Right ventricle myocardium inferior (tissue), 1 donor: ENCODE measurements at regions of chr15 and their contacts with region 1.

Region 1: DNA sequence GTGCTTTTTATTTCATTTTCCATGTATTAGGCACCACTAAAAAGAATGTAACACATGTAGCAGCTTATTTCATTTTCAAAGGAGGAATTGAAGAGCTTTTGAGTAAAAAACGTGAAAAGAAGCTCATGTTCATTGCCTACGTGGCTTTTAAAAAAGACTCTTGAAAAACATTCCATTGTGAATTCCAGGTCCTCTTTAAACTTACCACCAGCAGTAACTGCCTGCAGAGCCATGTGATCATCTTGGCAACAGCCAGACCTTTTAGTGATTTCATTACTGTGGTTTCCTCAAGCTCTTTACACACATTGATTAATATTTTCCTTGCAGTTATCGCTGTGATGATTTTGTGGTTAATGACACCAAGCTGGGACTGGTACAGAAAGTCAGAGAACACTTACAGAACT is 43.8 kb upstream of the FBXL22 start:
- DNase-seq: no peak
- ATAC-seq: peak; percentile 72

Region 2: DNA sequence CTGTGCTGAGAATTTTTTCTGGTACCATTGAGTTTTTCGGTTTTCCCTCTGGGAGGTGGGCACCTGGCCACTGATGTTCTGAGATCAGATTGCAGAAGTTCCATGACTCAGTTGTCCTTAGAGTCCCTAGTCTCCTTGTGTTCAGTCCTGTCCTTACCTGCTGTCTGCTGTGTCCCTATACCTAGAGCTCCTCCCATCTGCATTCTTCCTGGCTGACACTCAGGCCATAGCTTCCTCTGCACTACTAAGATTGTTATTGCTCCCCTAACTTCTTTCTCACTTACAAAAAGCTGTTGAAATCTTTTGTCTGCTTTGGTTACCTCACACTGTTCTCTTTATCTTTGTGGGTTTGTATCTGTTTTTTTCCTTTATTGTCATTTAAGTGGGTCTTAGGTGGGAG is 35.8 kb before region 1 on chr15:
- intact Hi-C with region 1: loop called (anchors 5 kb)
- DNase-seq: no peak
- ATAC-seq: no peak

Region 3: DNA sequence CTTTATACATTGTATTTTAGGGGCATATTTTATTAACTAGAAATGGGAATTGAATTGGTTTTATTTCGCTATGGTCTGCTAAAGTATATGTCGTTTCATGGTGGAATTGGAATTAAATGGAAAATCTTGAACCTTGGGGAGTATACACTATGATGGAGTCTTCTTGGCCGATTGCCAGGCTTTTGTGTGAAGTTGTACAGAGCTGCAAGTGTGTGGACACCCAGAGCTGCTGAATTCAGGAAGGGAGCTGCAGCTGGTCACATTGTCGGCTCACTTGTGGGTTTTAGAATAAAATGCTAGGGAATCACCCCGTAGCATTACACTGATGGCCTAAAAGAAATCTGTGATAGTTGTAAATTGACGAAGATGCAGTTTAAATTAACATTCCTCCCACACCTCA is 13.9 kb before region 1 on chr15:
- intact Hi-C with region 1: no loop called
- DNase-seq: no peak
- ATAC-seq: no peak

Region 4: DNA sequence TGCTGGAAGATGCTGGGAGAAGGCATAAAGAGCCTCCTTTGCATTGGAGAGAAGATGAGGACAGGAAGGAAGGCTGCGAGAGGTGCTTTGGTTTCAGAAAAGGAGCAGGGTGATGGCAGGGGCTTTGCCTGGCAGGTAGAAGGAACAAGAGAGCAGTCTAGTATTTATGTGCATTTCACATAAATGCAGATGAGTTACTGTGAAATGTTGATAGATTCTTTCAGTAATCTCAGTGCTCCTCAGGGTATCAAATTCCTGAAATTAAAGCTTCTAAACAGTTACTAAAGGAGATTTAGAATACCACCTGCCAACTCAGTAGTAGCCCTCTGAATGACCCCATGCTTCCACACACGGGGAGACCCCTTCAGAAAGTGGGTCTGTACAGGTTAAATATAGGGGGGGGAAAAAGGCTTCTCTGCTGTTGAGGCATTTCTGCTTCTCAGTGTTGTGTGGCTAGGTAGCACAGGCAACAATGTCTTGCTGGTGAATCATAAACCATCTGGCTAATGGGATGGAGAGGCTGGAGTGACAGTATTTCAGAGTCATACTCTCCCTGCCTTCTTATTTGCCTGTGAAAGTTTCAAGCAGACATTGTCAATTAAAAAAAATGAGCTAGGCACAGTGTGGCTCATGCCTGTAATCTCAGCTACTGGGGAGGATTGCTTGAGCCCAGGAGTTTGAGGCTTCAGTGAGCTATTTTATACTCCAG is 29.5 kb after region 1 on chr15:
- intact Hi-C with region 1: no loop called
- DNase-seq: no peak
- ATAC-seq: no peak

Region 5: DNA sequence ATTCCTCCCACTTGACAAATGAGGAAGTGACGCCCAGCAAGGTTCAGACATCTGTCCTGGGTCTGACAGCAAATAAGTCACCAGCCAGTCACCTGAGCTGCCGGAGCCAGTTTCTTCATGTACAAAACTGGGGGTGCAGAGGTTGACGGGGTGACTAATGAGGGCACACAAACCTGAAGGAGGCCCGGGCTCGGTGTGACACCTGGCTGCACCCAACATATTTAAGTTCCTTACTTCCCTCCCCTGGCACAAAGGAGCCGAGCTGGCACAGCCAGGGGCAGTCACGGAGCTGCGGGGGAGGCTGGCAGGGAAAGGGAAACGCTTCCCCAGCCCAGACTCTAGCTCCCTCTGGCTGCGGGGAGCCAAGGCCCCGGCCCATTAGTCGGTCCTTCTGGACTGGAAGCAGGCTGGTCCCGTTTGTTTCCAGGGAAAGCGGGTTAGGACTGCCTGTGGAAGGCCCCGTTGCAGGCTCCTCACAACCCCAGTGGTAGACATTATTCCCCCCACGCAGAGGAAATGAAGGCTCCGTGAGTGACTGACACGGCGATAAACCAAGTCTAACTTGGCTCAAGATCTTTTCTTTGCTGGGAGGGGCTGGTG is 46.1 kb after region 1 on chr15:
- intact Hi-C with region 1: no loop called
- DNase-seq: peak; percentile 79
- ATAC-seq: peak; percentile 53

Region 6: DNA sequence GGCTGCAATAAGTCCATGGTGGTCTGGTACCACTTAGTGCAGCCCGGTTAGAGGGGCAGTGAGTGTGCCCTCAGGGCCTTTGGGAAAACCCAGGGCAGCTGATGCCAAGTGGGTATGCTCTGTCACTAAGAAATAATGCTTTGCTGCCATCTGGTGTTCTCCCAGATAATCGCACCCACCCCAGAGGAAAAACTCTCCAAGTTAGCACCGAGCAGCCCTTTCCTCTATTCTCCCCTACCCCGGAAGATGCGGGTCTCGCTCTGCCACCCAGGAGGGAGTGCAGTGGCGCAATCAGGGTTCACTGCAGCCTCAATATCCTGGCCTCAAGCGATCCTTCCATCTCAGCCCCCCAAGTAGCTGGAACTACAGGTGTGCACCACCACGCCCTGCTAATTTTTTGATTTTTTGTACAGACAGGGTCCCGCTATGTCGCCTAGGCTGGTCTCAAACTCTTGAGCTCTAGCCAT is 514.2 kb after region 1 on chr15:
- intact Hi-C with region 1: no loop called
- DNase-seq: no peak
- ATAC-seq: peak; percentile 71